CD8-positive, alpha-beta T cell (primary cell): ENCODE measurements at regions of chr7 and their contacts with region 1.

Region 1: DNA sequence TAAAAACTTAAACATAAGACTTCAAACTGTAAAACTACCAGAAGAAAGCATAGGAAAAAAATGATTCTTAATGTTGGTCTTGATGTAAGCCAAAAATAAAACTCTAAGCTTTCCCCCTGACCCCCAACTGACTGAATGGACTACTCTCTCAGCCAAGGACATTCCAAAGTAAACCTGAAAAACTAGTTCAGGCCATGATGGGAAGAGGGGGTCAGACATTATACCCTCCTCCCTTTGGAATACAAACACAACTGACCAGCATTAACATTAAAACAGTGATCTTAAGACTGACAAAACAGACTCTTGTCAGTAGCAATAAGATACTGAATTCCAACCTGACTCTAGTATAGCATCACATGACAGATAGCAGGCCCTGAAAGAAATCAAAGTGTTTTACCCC is 13.5 kb upstream of the LRGUK start:
- DNase-seq: no peak
- ATAC-seq: no peak
- H3K4me3 ChIP-seq: no peak overlapping the region
- H3K4me3 Mint-ChIP-seq: no peak overlapping the region
- H3K27ac ChIP-seq: no peak overlapping the region
- H3K27ac Mint-ChIP-seq: no peak overlapping the region
- H3K4me1 ChIP-seq: no peaks in the 10 kb centered on the region
- H3K4me1 Mint-ChIP-seq: no peaks in the 10 kb centered on the region
- H3K27me3 ChIP-seq: no peaks in the 10 kb centered on the region
- H3K27me3 Mint-ChIP-seq: peaks cover 2% of the 10 kb centered on the region
- CTCF ChIP-seq: no peak

Region 2: GRCh38 chr7:134098072-134098471 is 15.6 kb before region 1 on chr7:
- CTCF ChIA-PET with region 1: no interaction called
- POLR2A ChIA-PET with region 1: no interaction called
- intact Hi-C with region 1: loop called in 1 of 2 experiments (anchors 1 kb)
- DNase-seq: no peak
- ATAC-seq: no peak
- H3K4me3 ChIP-seq: no peak overlapping the region
- H3K4me3 Mint-ChIP-seq: no peak overlapping the region
- H3K27ac ChIP-seq: no peak overlapping the region
- H3K27ac Mint-ChIP-seq: no peak overlapping the region
- H3K4me1 ChIP-seq: no peaks in the 10 kb centered on the region
- H3K4me1 Mint-ChIP-seq: no peaks in the 10 kb centered on the region
- H3K27me3 ChIP-seq: no peaks in the 10 kb centered on the region
- H3K27me3 Mint-ChIP-seq: no peaks in the 10 kb centered on the region
- CTCF ChIP-seq: no peak